ENCODE measurements at regions of chr2 and their contacts with region 1.

Region 1: DNA sequence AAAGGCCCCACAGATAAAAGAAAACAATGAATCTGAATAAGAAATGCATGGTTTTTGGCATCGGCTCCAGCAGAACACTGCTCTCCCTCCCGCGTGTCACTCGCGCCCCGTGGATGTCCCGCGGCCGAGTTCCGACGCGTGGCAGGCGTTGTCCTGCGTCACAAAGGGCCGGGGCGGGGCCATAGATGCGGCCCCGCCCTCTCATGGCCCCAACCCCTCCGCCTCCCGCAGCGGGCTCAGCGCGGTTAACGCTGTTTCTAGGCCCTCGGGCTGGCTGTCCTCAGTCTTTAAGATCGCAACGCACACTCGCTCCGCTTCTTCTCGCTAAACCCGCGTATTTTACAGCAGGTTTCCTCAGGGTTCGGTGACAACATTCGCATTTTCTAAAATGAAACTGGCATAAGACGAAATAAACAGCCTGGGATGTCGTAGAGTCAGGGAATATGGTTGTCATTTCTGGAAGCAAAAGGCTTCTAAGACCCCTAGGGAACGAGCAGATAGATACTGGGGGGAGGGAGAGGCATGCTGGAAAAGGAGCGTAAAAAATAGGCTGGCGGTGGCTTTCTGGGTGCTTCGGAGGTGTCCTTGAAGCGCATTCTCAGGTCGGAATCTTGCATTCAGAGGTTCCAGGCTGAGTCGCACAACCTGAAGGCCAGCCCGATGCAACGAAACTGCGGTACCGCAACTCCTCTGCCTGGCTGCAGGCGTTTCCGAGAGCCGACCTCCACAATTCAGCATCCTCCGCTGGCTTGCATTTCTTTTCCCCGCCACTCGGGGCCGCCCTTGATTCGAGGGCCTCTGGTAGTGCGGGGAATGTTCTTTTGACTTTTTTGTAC is at the start of gene FKBP7:
- DNase-seq: peak; percentile 87
- H3K4me3 ChIP-seq: peak within 1 kb of the TSS; percentile 78
- H3K27ac ChIP-seq: peak within 1 kb of the TSS; percentile 86
- H3K4me1 ChIP-seq: peaks cover 38% of the 10 kb centered on the region
- CTCF ChIP-seq: peak; percentile 85
- total RNA-seq, gene FKBP7: 8.5 and 10.7 TPM in 2 replicates

Region 2: GRCh38 chr2:178450774-178451525 is 27.7 kb before region 1 on chr2 and contains the starts of genes PJVK and PRKRA:
- CTCF ChIA-PET with region 1: interaction called, 3 read pairs
- POLR2A ChIA-PET with region 1: interaction called, 21 read pairs
- intact Hi-C with region 1: loop called (anchors 1 kb)
- DNase-seq: peak; percentile 96
- H3K4me3 ChIP-seq: peak within 1 kb of the TSS; percentile 82
- H3K27ac ChIP-seq: peak within 1 kb of the TSS; percentile 85
- H3K4me1 ChIP-seq: peaks cover 23% of the 10 kb centered on the region
- CTCF ChIP-seq: no peak
- total RNA-seq, gene PJVK: 2.2 and 4.0 TPM in 2 replicates
- total RNA-seq, gene PRKRA: 68.7 and 79.5 TPM in 2 replicates

Region 3: GRCh38 chr2:178522950-178523595 is 44.4 kb after region 1 on chr2:
- CTCF ChIA-PET with region 1: no interaction called
- POLR2A ChIA-PET with region 1: no interaction called
- intact Hi-C with region 1: loop called (anchors 1 kb)
- DNase-seq: peak; percentile 85
- H3K4me3 ChIP-seq: peak overlapping the region; percentile 73
- H3K27ac ChIP-seq: no peak overlapping the region
- H3K4me1 ChIP-seq: no peaks in the 10 kb centered on the region
- CTCF ChIP-seq: peak; percentile 84

Region 4: GRCh38 chr2:178707476-178707875 is 228.8 kb after region 1 on chr2:
- CTCF ChIA-PET with region 1: no interaction called
- POLR2A ChIA-PET with region 1: no interaction called
- intact Hi-C with region 1: no loop called
- DNase-seq: no peak
- H3K4me3 ChIP-seq: no peak overlapping the region
- H3K27ac ChIP-seq: no peak overlapping the region
- H3K4me1 ChIP-seq: no peaks in the 10 kb centered on the region
- CTCF ChIP-seq: no peak